ENCODE measurements at regions of chr15 and their contacts with region 1.

Region 1: DNA sequence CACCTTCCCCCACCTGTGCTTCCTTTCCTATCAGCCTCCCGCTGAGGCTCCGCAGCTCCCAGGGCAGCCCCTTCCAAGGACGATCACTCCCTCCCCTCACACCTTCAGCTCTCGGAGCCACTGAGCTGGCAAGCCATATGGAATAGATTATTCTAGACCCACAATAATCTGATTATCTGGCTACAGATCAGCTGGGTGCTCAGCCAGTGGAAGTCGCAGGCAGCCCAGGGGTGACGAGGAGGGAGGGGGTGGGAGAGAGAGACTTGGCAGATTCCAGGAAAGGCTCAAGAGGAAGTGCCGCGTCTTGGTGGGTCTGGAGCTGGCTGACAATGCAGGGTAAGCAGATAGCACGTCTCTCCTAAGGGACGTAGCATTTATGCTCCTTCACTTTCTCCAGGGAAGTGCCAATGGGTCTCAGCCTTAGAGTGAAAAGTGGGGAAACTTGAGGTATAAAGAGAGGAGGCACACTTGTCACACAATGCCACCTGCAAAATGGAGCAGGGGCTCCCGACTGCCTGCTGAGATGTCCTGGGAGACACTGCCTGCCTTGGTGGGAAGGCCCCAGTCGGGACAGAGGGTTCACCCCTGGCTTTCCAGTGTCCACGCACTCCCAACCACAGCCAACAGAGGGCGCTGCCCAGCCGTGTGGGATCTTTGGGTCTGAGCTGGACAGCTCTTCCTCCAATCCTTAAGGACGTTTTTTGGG is 9.4 kb upstream of the MESP1 start:
- DNase-seq: peak; percentile 95
- H3K4me3 ChIP-seq: no peak overlapping the region
- H3K27ac ChIP-seq: no peak overlapping the region
- H3K4me1 ChIP-seq: peaks cover 0 to 9% (median 4%) of the 10 kb centered on the region in 4 donors
- H3K27me3 ChIP-seq: no peaks in the 10 kb centered on the region
- CTCF ChIP-seq: peak; percentile 90 to 98 (median 91)
- EP300 ChIP-seq: no peak
- POLR2A ChIP-seq: no peak

Region 2: DNA sequence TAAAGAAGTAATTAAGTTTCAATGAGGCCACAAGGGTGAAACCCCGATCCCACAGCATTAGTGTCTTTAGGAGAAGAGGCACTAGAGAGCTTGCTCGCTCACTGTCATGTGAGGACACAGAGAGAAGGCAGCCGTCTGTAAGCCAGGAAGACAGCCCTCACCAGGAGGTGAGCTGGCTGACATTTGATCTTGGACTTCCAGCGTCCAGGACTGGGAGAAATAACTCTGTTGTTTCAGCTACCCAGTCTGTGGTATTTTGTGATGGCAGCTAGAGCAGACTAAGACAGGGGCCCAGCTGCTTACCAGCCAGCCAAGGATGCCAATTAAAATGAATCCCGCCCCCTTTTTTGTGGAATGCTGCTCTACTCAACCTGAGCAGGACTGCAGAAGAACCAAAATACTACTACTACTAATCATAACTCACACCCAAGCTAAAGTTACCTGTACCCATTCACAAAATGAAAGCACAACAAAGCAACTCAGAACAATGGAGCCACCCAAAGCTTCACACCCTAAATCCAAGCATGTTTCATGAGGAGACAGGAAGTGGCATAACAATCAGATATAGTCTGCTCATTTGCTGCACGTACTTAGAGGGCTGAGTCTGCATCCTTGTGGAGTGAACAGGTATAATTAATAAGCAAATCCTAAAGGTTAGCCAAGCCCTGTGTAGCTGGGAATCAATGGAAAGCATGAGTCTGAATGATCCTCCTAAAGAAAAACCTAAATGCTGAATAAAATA is 228.5 kb before region 1 on chr15:
- intact Hi-C with region 1: no loop called
- DNase-seq: peak; percentile 79
- H3K4me3 ChIP-seq: no peak overlapping the region
- H3K27ac ChIP-seq: no peak overlapping the region
- H3K4me1 ChIP-seq: no peaks in the 10 kb centered on the region
- H3K27me3 ChIP-seq: no peaks in the 10 kb centered on the region
- CTCF ChIP-seq: no peak
- EP300 ChIP-seq: no peak
- POLR2A ChIP-seq: no peak

Region 3: GRCh38 chr15:89874926-89875564 is 114.6 kb after region 1 on chr15:
- intact Hi-C with region 1: loop called (anchors 2 kb)
- DNase-seq: peak; percentile 93
- H3K4me3 ChIP-seq: no peak overlapping the region
- H3K27ac ChIP-seq: no peak overlapping the region
- H3K4me1 ChIP-seq: peaks cover 0 to 13% (median 6%) of the 10 kb centered on the region in 4 donors
- H3K27me3 ChIP-seq: no peaks in the 10 kb centered on the region
- CTCF ChIP-seq: peak; percentile 86 to 91 (median 87)
- EP300 ChIP-seq: no peak
- POLR2A ChIP-seq: no peak

Measured in esophagus muscularis mucosa (tissue), 4 donors.